ENCODE measurements at regions of chr19 and their contacts with region 1.

Region 1: GRCh38 chr19:40862785-40863184 is 12.5 kb upstream of the CYP2A6 start:
- DNase-seq: no peak
- H3K4me3 ChIP-seq: no peak overlapping the region
- H3K4me3 Mint-ChIP-seq: no peak overlapping the region
- H3K27ac Mint-ChIP-seq: no peak overlapping the region
- H3K4me1 ChIP-seq: peaks cover 15% of the 10 kb centered on the region
- H3K4me1 Mint-ChIP-seq: peaks cover 7% of the 10 kb centered on the region
- H3K27me3 ChIP-seq: no peaks in the 10 kb centered on the region
- H3K27me3 Mint-ChIP-seq: no peaks in the 10 kb centered on the region
- CTCF ChIP-seq: no peak

Region 2: DNA sequence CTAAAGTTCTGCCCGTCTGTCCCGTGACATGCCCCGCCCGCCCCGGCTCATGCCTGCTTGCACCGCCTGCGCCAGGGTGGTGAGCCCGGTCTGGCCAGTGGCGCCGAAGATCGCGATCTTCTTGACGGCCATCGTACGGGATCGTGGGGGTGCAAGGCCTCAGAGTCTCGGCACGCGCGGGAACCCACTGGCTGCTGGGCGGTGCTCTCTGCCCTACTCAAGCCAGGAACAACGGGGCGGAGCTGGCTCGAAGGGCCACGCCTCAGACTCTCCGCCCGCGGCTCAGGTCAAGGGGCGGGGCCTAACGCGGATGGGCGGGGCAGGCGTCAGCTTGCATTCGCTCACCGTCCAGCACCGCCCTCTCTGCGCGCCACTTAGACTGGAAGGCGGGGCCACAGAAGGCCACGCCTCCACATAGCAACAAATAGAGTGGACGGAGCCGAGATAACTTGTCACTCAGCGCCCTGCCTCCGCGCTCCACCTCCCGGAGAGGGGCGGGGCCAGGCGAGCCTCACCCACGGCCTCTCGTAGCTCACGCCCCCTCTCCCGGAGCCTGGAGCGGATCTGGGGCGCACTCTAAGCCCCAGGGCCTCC is 397.1 kb before region 1 on chr19 and contains the start of gene BLVRB:
- CTCF ChIA-PET with region 1: no interaction called
- POLR2A ChIA-PET with region 1: no interaction called
- intact Hi-C with region 1: no loop called
- DNase-seq: peak; percentile 99 to 100
- H3K4me3 ChIP-seq: peak within 1 kb of the TSS; percentile 73
- H3K4me3 Mint-ChIP-seq: peak within 1 kb of the TSS; percentile 79
- H3K27ac Mint-ChIP-seq: peak within 1 kb of the TSS; percentile 92
- H3K4me1 ChIP-seq: peaks cover 20% of the 10 kb centered on the region
- H3K4me1 Mint-ChIP-seq: peaks cover 20% of the 10 kb centered on the region
- H3K27me3 ChIP-seq: no peaks in the 10 kb centered on the region
- H3K27me3 Mint-ChIP-seq: peaks cover 4% of the 10 kb centered on the region
- CTCF ChIP-seq: no peak
- total RNA-seq, gene BLVRB: 75.2 and 101 TPM in 2 replicates

Region 3: GRCh38 chr19:40889366-40889765 is 26.6 kb after region 1 on chr19:
- CTCF ChIA-PET with region 1: no interaction called
- POLR2A ChIA-PET with region 1: interaction called, 15 read pairs
- intact Hi-C with region 1: no loop called
- DNase-seq: no peak
- H3K4me3 ChIP-seq: no peak overlapping the region
- H3K4me3 Mint-ChIP-seq: no peak overlapping the region
- H3K27ac Mint-ChIP-seq: no peak overlapping the region
- H3K4me1 ChIP-seq: no peaks in the 10 kb centered on the region
- H3K4me1 Mint-ChIP-seq: peaks cover 11% of the 10 kb centered on the region
- H3K27me3 ChIP-seq: no peaks in the 10 kb centered on the region
- H3K27me3 Mint-ChIP-seq: no peaks in the 10 kb centered on the region
- CTCF ChIP-seq: no peak